ENCODE measurements at regions of chr1 and their contacts with region 1.

Region 1: DNA sequence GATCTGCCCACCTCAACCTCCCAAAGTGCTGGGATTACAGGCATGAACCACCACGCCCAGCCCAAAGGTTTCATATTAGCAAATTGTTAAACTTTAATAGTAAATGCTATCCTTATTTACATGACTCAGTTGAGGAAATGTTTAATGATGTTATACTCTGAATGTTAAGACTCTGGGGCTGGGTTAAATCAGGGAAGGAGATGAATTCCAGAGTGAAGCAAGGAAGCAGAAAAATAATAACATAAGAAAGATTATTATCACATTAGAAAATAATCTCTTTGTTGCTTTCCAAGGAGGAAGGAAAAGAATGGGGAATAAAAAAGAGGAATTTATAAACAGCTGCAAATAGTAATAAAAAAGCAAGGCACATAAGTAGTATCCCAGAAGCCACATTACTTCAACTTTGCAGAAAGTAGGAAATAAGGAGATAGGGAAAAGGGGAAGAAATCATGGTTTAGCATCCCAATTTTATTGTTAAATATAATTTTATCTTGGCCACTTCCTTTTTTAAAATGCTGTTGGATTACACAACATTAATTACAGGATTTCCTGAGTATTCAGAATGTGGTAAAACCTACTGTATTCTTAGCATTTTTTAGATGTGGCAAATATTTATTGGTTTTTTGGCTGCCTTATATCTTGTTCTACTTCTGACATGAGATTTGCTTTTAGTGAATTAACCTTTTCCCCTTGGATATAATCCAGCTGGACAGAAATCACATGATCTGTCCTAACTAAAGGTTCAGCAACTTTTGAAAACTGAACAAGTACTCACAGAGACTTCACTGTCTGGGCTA is 105.1 kb downstream of the PTGS2 start:
- DNase-seq: peak; percentile 79
- H3K4me3 ChIP-seq: no peak overlapping the region
- H3K27ac ChIP-seq: peak overlapping the region; percentile 45
- H3K4me1 ChIP-seq: peaks cover 21% of the 10 kb centered on the region
- H3K27me3 ChIP-seq: no peaks in the 10 kb centered on the region
- CTCF ChIP-seq: no peak
- POLR2A ChIP-seq: no peak

Region 2: DNA sequence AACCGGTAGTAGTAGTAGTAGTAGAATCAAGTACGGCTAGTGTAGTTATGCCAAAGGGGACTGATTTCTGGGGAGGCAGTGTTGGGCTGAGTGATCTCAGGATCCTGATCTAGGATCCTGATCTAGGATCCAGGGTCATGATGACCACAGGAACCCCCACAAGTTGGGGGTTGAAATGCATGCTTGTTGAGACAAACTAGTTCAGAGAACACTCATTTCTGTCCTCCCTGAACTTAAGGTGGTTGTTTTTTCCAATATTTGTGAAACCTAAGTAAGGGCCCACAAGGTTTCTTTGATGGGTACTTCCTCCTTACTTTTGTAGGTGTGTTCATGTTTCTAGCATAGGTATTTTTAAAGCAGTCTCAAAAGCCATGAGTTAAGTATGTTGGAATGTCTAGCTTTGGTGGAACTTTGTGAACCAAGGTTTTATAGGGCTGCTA is 80.3 kb before region 1 on chr1:
- CTCF ChIA-PET with region 1: no interaction called
- POLR2A ChIA-PET with region 1: no interaction called
- dilution Hi-C with region 1: no loop called
- intact Hi-C with region 1: loop called (anchors 2 kb)
- DNase-seq: no peak
- H3K4me3 ChIP-seq: no peak overlapping the region
- H3K27ac ChIP-seq: no peak overlapping the region
- H3K4me1 ChIP-seq: peaks cover 36% of the 10 kb centered on the region
- H3K27me3 ChIP-seq: no peaks in the 10 kb centered on the region
- CTCF ChIP-seq: no peak
- POLR2A ChIP-seq: no peak

Region 3: DNA sequence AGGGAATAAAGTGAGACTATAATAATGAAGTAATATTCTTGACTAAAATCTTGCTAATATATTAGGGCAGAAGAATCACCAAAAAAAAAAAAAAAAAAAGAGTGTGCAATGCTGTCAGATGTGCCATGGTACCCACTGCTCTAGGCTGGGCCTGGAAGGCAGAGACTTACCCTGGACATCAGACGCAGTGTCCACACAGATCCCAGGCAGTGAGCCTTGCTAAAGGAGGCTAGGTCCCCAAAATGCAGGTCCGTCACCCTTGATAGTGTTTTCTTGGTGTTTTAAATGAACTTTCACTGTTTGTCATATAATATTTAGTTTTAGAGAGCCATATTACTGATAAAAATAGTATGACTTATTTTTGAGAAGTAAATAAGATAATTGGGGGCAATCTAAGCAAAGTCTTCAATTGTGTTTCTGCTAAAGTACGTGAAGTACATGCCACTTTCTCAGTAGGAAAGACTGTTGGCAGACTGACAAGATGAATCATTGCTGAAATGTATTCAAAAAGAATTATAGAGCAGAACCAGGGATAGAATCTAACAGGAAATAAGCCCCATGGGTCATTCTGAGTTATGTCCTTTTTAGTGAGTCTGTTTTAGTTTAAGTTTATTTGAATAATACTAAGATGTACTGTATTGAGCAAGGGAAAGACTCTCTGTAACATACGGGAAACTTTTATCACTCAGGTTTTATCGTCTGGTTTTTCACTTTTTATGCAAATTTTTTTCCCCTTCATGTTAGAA is 39.6 kb before region 1 on chr1:
- CTCF ChIA-PET with region 1: no interaction called
- POLR2A ChIA-PET with region 1: no interaction called
- dilution Hi-C with region 1: no loop called
- intact Hi-C with region 1: loop called (anchors 2 kb)
- DNase-seq: peak; percentile 96
- H3K4me3 ChIP-seq: no peak overlapping the region
- H3K27ac ChIP-seq: peak overlapping the region; percentile 77
- H3K4me1 ChIP-seq: peaks cover 27% of the 10 kb centered on the region
- H3K27me3 ChIP-seq: no peaks in the 10 kb centered on the region
- CTCF ChIP-seq: no peak
- POLR2A ChIP-seq: no peak

Region 4: GRCh38 chr1:186595969-186596368 is 20.8 kb after region 1 on chr1:
- CTCF ChIA-PET with region 1: no interaction called
- POLR2A ChIA-PET with region 1: no interaction called
- dilution Hi-C with region 1: no loop called
- intact Hi-C with region 1: no loop called
- DNase-seq: no peak
- H3K4me3 ChIP-seq: no peak overlapping the region
- H3K27ac ChIP-seq: no peak overlapping the region
- H3K4me1 ChIP-seq: no peaks in the 10 kb centered on the region
- H3K27me3 ChIP-seq: no peaks in the 10 kb centered on the region
- CTCF ChIP-seq: no peak
- POLR2A ChIP-seq: no peak

Measured in endothelial cell of umbilical vein (primary cell).